ENCODE measurements at regions of chr20 and their contacts with region 1.

Region 1: GRCh38 chr20:59042796-59043660 is 442 bp upstream of the PRELID3B start:
- DNase-seq: peak; percentile 94
- H3K4me3 ChIP-seq: peak overlapping the region; percentile 93
- H3K27ac ChIP-seq: peak overlapping the region; percentile 86
- H3K4me1 ChIP-seq: peaks cover 25% of the 10 kb centered on the region
- H3K27me3 ChIP-seq: no peaks in the 10 kb centered on the region
- CTCF ChIP-seq: no peak

Region 2: DNA sequence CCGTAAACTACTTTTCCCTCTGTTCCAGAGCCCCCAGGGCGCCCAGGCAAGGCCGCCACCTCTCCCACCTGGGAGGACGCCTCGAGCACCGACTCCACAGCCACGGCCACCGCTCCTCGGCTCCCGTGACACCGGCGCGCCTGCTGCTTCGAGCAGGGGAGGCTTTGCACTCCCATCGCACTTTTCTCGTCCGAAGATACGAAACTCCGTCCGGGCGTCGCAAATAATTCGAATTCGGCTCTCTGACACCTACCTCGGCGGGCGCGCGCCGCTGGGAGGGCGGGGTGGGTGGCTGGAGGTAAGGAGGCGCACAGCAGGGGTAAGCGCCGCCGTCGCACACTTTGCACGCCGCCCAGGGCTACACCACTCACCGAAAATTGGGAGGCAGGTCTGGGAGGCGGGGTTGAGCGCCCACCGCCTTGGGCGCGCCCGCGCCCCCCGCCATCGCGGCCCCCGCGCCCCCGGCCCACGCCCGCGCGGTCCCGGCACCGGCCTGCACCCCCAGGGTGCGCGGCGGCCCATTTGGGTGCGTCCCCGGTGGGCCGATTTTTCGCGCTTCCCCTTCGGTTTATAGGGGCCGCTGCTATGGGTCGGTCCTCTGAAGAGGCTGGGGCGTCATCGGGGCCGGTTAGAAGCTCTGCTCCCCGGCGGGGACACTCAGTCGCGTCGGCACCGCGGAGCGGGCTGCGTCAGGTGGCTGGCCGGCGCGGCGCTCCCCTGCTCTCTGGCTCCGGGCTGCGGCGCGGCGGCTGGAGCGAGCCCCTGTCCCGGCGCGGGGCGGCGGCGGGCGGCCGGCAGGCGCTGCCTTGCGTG is 154.3 kb before region 1 on chr20:
- intact Hi-C with region 1: loop called (anchors 5 kb)
- DNase-seq: peak; percentile 80
- H3K4me3 ChIP-seq: peak overlapping the region; percentile 48
- H3K27ac ChIP-seq: peak overlapping the region; percentile 89
- H3K4me1 ChIP-seq: peaks cover under 1% of the 10 kb centered on the region
- H3K27me3 ChIP-seq: no peaks in the 10 kb centered on the region
- CTCF ChIP-seq: no peak

Region 3: GRCh38 chr20:59284470-59284869 is 241.4 kb after region 1 on chr20:
- intact Hi-C with region 1: no loop called
- DNase-seq: no peak
- H3K4me3 ChIP-seq: no peak overlapping the region
- H3K27ac ChIP-seq: no peak overlapping the region
- H3K4me1 ChIP-seq: no peaks in the 10 kb centered on the region
- H3K27me3 ChIP-seq: no peaks in the 10 kb centered on the region
- CTCF ChIP-seq: no peak